ENCODE measurements at regions of chr14 and their contacts with region 1.

Region 1: DNA sequence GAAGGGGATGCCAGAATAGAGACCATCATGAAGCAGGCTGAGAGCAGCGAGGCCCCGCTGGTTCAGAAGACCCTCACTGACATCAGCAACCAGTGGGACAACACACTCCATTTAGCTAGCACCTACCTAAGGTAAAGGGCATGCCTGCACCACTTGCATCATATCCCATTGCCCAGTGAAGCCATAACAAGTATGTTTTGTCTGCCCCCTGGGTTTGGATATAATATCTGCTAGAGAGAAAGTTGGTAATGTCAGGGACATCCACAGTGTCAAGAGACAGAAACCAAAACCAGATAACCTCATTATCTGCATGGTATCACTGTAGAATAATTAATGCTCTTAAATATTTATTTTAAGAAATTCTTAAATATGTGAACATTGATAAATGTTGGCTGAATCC is 173.8 kb downstream of the SYNE2 start:
- DNase-seq: no peak
- H3K4me3 ChIP-seq: no peak overlapping the region
- H3K27ac ChIP-seq: no peak overlapping the region
- H3K4me1 ChIP-seq: no peaks in the 10 kb centered on the region
- H3K27me3 ChIP-seq: no peaks in the 10 kb centered on the region
- CTCF ChIP-seq: no peak

Region 2: DNA sequence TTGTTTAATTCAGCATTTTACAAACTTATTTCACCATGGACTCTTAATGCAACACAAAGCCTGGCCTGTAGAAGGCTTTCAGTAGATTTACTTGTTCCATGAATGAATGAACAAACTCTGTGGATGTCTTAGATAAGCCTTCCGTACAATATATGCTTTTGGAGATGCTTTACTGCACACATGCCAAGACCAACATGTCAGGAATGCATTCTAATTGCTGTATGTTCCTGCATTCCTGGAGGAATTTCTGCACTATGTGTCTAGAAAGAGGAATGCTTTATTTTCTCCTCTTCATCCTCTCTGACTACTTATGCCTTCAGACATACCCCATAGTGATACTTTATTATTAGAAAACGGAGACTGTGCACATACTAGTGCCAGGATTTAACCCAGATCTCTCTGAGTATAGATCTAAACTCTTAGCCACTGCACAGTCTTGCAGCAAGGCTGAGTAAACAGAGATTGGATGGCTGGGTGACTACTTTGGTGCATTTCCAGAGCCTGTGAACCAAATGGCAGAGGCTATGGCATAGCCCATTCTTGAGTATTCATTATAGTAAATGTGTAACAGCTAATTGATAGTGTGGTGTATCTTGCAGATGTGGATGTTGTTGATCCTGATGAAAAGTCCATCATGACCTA is 65.6 kb before region 1 on chr14:
- intact Hi-C with region 1: no loop called
- DNase-seq: no peak
- H3K4me3 ChIP-seq: no peak overlapping the region
- H3K27ac ChIP-seq: no peak overlapping the region
- H3K4me1 ChIP-seq: no peaks in the 10 kb centered on the region
- H3K27me3 ChIP-seq: no peaks in the 10 kb centered on the region
- CTCF ChIP-seq: no peak

Region 3: DNA sequence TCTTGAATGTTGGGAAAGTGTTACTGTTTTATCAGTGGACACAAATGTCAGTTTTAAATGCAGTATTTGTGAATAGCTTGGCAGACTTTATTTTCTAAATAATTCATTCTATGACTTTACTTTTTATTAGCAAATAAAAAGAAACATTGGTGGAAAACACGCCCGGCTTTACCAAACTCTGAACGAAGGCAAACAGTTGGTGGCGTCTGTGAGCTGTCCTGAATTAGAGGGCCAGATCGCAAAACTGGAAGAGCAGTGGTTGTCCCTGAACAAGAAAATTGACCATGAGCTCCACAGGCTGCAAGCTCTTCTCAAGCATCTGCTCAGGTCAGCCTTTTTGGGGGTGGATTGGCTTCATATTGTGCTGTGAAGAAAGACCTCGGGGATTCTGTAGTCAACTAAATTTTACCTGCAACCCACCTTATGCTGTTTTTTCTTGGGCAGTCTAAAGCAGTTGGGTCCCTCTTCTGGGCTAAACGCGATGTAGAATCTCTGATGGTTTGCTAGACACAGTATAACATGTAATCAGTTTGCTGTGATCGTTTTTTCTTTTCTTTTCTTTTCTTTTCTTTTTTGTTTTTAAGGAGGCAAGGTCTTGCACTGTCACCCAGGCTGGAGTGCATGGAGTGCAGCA is 111.2 kb after region 1 on chr14:
- intact Hi-C with region 1: loop called (anchors 5 kb)
- DNase-seq: no peak
- H3K4me3 ChIP-seq: no peak overlapping the region
- H3K27ac ChIP-seq: no peak overlapping the region
- H3K4me1 ChIP-seq: no peaks in the 10 kb centered on the region
- H3K27me3 ChIP-seq: no peaks in the 10 kb centered on the region
- CTCF ChIP-seq: no peak

Measured in ascending aorta (tissue), 2 donors.